Ovary (tissue), 10 donors: ENCODE measurements at regions of chr7 and their contacts with region 1.

Region 1: GRCh38 chr7:102044984-102045673 is 227.7 kb downstream of the CUX1 start:
- DNase-seq: peak; percentile 47 to 80 (median 68)
- H3K4me3 ChIP-seq: peak overlapping the region; percentile 25
- H3K27ac ChIP-seq: no peak overlapping the region
- H3K4me1 ChIP-seq: peaks cover 11% of the 10 kb centered on the region
- H3K27me3 ChIP-seq: no peaks in the 10 kb centered on the region
- CTCF ChIP-seq: no peak
- EP300 ChIP-seq: no peak
- POLR2A ChIP-seq: no peak

Region 2: DNA sequence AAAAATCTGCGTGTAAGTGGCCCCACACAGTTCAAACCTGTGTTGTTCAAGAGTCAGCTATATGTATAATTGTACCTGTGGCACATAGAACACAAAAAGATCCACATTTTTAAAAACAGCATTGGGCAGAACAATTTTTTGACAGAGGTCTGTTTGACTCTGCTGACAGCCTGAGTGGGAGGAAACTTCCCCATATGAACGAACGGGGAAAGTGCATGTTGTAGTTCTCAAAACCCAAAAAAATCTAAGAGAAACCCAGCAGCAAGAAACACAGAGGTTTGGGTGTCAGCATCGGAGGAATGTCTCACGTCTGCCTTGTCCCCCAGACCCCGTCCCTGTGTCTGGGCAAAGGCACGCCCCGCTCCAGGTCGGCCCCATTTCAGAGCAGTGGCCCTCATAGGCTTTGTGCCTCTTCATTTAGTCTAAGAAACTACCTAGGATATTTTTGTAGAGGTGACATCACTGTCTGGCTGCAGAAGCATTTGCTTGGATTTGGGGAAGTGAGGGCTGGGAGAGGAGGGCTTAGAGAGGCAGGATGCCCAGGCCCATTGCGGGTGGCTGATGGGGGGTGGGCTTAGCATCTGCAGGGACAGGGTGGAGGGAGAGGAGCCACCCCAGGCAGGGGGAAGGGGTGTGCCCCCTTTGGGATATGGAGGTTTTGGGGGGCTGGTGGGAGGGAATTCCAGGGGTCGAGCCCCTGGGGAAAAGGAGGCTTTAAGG is 216.7 kb before region 1 on chr7:
- intact Hi-C with region 1: loop called in 1 of 4 experiments (anchors 5 kb)
- DNase-seq: peak in 1 of 5 donors; percentile 24
- H3K4me3 ChIP-seq: no peak overlapping the region
- H3K27ac ChIP-seq: no peak overlapping the region
- H3K4me1 ChIP-seq: peaks cover 3% of the 10 kb centered on the region
- H3K27me3 ChIP-seq: no peaks in the 10 kb centered on the region
- CTCF ChIP-seq: no peak
- EP300 ChIP-seq: no peak
- POLR2A ChIP-seq: no peak

Region 3: DNA sequence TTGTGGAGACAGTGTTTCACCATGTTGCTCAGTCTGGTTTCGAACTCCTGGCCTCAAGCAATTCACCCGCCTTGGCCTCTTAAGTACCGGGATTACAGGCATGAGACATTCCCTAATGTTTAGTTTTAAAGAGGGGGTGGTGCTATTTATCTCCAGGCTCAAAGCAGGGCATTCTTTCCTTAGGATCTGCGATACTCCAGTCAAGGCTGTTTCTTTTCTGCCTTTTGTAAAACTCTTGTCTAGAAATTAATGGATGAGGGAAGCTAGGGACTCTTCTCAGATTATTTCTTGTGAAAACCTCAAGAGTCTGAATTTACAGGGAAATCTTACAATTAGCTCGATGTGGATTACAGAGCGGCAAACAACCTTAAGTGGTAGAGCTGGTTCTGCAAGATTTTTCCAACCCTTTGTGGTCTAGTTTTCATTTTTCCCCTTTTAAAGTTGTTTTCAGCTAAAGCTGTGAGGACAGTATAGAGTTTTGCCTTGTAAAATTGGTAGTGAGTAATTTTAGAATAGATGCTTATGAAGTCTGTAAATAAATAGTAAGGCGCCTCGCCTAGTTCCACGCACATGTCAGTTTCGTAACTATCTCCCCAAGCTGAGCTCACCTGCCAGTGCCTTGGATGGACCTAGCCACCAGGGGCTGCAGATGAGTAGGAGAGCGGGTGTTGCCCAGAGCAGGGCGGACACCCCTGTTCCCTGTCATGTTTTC is 174.6 kb before region 1 on chr7:
- intact Hi-C with region 1: no loop called
- DNase-seq: no peak
- H3K4me3 ChIP-seq: no peak overlapping the region
- H3K27ac ChIP-seq: no peak overlapping the region
- H3K4me1 ChIP-seq: peaks cover 24% of the 10 kb centered on the region
- H3K27me3 ChIP-seq: no peaks in the 10 kb centered on the region
- CTCF ChIP-seq: no peak
- EP300 ChIP-seq: no peak
- POLR2A ChIP-seq: no peak